Activated B cell treated with CpG ODN at 0.5 μM for 24 hours (primary cell): ENCODE measurements at regions of chr1 and their contacts with region 1.

Region 1: GRCh38 chr1:154974063-154974807 is at the start of gene CKS1B:
- DNase-seq: peak; percentile 87
- ATAC-seq: peak; percentile 83
- H3K4me3 Mint-ChIP-seq: no peak within 1 kb of the TSS
- H3K27ac Mint-ChIP-seq: no peak within 1 kb of the TSS
- H3K4me1 Mint-ChIP-seq: peaks cover 36% of the 10 kb centered on the region
- H3K27me3 Mint-ChIP-seq: no peaks in the 10 kb centered on the region
- CTCF ChIP-seq: no peak
- total RNA-seq, gene CKS1B: 25.3 and 26.6 TPM in 2 replicates

Region 2: DNA sequence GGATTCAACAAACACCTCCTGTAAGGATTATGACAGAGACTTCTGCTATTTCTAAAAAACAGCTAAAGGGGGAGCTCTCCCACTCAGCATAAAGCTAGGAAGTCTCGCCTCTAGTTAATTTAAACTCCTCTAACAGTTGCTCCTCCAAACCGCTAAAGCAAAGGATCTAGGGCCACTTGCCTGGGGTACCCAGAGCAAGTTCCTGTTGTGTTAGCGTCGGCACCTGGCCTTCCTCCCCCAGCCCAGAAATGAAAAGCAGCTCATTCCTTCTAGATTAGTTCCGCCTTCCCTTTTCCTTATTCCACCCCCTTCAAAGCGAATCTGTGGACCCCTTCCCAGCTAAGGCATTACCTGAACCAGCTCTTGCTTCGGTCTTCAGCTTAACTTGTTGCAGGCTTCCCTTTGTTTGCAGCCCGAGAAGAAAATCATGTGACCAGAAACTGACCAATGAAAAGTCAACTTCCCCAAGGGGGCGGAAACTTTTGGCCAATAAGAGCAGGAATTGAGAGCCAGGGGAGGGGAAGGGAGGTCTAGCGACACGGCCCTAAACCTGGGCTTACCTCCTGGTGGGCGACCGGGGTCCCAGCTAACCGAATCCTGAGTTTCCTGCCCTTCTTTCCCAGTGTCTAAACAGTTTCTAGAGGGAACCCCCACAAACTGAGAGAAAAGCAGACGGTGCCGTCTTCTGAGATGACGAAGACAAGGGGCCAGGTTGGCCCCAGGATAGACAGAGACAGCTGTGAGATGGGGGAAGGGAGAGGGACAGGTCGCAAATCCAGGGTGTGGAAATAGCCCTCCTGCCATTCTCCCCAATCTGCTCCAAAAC is 18.3 kb before region 1 on chr1 and contains the start of gene PBXIP1:
- CTCF ChIA-PET with region 1: interaction called, 11 read pairs
- POLR2A ChIA-PET with region 1: interaction called, 53 read pairs
- intact Hi-C with region 1: loop called (anchors 1 kb)
- DNase-seq: peak; percentile 52
- ATAC-seq: peak; percentile 72
- H3K4me3 Mint-ChIP-seq: peak within 1 kb of the TSS; percentile 91
- H3K27ac Mint-ChIP-seq: peak within 1 kb of the TSS; percentile 93
- H3K4me1 Mint-ChIP-seq: peaks cover 81% of the 10 kb centered on the region
- H3K27me3 Mint-ChIP-seq: no peaks in the 10 kb centered on the region
- CTCF ChIP-seq: no peak
- total RNA-seq, gene PBXIP1: 42.4 and 43.2 TPM in 2 replicates

Region 3: GRCh38 chr1:154961497-154962262 is 12.6 kb before region 1 on chr1 and contains the start of gene PYGO2:
- CTCF ChIA-PET with region 1: interaction called, 11 read pairs
- POLR2A ChIA-PET with region 1: interaction called, 53 read pairs
- intact Hi-C with region 1: loop called (anchors 1 kb)
- DNase-seq: peak; percentile 85
- ATAC-seq: peak; percentile 88
- H3K4me3 Mint-ChIP-seq: peak within 1 kb of the TSS; percentile 87
- H3K27ac Mint-ChIP-seq: peak within 1 kb of the TSS; percentile 86
- H3K4me1 Mint-ChIP-seq: peaks cover 45% of the 10 kb centered on the region
- H3K27me3 Mint-ChIP-seq: no peaks in the 10 kb centered on the region
- CTCF ChIP-seq: no peak
- total RNA-seq, gene PYGO2: 33.1 and 38.1 TPM in 2 replicates

Region 4: DNA sequence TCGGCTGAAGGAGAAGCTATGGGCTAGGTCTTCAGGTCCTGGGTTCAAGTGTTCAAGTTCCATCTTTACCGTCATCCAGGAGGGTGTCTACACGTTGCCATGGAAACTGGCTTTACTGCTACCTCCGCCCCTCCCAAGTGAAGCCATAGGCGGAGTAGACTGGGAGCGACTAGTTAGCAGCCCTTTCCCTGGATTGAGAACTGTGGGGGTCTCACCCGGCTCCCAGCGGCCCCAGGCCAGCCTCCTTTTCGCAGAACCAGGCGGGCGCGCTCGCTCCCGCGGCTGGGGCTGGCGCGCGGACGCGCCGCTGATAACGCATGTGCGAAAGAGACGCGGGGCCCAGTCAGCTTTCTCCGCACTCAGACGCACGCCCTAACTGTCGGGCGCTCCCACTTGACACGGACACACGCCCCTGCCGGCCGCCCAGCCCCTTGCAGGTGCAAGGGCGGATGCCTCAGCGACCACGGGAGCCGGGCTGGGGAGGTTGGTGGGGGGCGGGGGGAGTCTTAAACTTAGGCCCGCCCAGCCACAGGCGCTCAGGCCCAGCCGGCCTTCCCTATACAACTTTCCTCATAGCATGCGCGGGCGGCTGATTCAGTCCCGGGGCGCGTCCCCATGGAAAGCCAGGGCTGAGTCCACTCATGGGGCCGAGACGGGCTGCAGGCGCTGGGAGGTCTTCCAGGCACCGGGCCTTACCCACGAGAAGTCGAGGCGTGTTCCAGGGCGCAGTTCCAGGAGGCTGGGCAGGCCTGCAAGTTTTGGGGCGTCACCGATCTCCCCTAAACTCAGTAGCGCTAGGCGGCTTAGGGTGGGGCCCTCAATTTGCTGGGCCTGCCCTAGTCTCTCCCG is 96.7 kb after region 1 on chr1:
- CTCF ChIA-PET with region 1: no interaction called
- POLR2A ChIA-PET with region 1: interaction called, 12 read pairs
- intact Hi-C with region 1: no loop called
- DNase-seq: peak; percentile 72
- ATAC-seq: peak; percentile 99
- H3K4me3 Mint-ChIP-seq: peak overlapping the region; percentile 55
- H3K27ac Mint-ChIP-seq: peak overlapping the region; percentile 77
- H3K4me1 Mint-ChIP-seq: peaks cover 54% of the 10 kb centered on the region
- H3K27me3 Mint-ChIP-seq: no peaks in the 10 kb centered on the region
- CTCF ChIP-seq: no peak

Region 5: DNA sequence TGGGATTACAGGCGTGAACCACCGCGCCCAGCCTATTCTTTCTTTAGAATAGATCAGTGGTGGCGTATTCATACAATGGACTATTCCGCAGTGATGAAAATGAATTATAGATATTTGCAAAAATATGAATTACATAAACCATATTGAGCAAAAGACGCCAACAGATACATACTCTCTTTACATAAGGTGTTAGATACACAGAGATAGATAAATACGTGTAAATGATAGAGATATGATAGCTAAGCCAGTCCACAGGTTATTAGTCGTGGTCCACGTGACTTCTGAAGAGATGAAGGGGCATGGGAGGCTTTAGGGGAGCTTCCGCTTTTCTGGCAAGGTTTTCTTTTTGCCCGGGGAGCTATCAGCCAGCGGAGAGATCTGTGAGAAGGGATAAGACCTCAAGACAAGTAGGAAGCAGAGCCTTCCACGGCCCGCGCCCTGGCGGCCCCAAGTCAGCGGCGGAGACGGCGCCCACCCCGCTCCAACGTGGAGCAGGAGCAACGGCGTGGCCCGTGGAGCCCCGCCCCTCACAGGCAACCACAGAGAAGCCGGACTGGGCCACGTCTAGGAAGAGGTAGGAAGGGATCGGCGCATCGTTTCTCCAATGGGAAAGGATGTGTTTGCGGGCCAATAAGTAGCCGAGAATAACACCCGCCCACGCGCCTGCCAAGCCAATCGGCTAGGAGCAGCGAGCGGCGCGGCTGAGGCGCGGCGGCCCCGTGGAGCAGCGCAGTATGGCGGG is 635.5 kb after region 1 on chr1 and contains the start of gene MSTO1:
- CTCF ChIA-PET with region 1: no interaction called
- POLR2A ChIA-PET with region 1: interaction called, 15 read pairs
- intact Hi-C with region 1: no loop called
- DNase-seq: peak; percentile 81
- ATAC-seq: peak; percentile 94
- H3K4me3 Mint-ChIP-seq: peak within 1 kb of the TSS; percentile 93
- H3K27ac Mint-ChIP-seq: peak within 1 kb of the TSS; percentile 92
- H3K4me1 Mint-ChIP-seq: peaks cover 9% of the 10 kb centered on the region
- H3K27me3 Mint-ChIP-seq: no peaks in the 10 kb centered on the region
- CTCF ChIP-seq: no peak
- total RNA-seq, gene MSTO1: 85.4 and 101 TPM in 2 replicates